Breast epithelium (tissue), 4 donors: ENCODE measurements at regions of chr1 and their contacts with region 1.

Region 1: GRCh38 chr1:239909898-239910297 is 181.8 kb upstream of the FMN2 start:
- DNase-seq: peak in 1 of 2 donors; percentile 22
- H3K4me3 ChIP-seq: no peak overlapping the region
- H3K27ac ChIP-seq: no peak overlapping the region
- H3K4me1 ChIP-seq: no peaks in the 10 kb centered on the region
- H3K27me3 ChIP-seq: no peaks in the 10 kb centered on the region
- CTCF ChIP-seq: no peak
- POLR2A ChIP-seq: no peak

Region 2: GRCh38 chr1:239413916-239414315 is 496.0 kb before region 1 on chr1:
- intact Hi-C with region 1: loop called (anchors 10 kb)
- DNase-seq: no peak
- H3K4me3 ChIP-seq: no peak overlapping the region
- H3K27ac ChIP-seq: no peak overlapping the region
- H3K4me1 ChIP-seq: no peaks in the 10 kb centered on the region
- H3K27me3 ChIP-seq: no peaks in the 10 kb centered on the region
- CTCF ChIP-seq: no peak
- POLR2A ChIP-seq: no peak

Region 3: GRCh38 chr1:240111558-240111957 is 201.7 kb after region 1 on chr1:
- intact Hi-C with region 1: no loop called
- DNase-seq: no peak
- H3K4me3 ChIP-seq: no peak overlapping the region
- H3K27ac ChIP-seq: no peak overlapping the region
- H3K4me1 ChIP-seq: no peaks in the 10 kb centered on the region
- H3K27me3 ChIP-seq: no peaks in the 10 kb centered on the region
- CTCF ChIP-seq: no peak
- POLR2A ChIP-seq: no peak